HCT116 (cell line): ENCODE measurements at regions of chr2 and their contacts with region 1.

Region 1: DNA sequence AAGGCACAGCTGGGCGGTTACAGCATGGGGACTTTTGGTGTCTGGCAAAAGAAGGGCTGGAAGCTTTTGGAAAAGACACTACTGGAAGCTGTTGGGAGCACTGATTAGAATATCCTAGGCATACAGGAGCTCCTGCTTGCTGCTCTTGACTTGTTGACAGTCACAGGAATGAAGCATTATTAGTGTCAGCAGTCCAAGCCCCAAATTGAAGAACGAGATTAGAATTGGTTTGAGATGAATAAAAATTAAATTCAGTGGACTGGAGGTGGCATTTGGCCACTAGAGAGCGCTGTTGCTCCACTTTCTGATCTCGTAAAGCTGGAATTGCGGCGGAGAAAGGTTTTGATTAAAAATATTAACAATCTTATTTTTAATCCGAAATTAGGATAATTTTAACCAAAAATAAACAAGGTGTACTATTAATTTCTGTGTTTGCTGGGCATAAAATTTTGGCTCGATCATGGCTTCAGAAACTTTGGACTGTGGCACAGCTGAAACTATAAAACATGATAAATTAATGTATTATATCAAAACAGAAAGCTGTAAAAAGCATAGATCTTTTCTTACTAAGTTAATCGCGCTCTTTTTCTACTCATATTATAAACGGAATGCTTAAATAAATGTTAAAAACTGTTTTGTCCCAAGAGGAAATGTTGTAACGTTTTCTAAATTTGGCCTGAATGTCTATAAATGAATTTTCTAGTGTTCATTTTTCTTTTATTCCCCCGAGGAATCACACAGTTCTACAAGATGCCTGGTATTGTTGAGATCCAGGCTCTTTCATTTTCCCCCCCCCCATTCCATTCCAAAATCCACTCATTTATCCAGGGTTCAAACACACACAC is 2.4 kb upstream of the HOXD8 start:
- DNase-seq: no peak
- ATAC-seq: no peak
- H3K4me3 ChIP-seq: peak overlapping the region; percentile 9; a peak in 2 of 4 replicates
- H3K27ac ChIP-seq: no peak overlapping the region
- H3K4me1 ChIP-seq: peaks cover 6 to 17% of the 10 kb centered on the region in 2 experiments; a peak in 3 of 4 replicates
- H3K27me3 ChIP-seq: no peaks in the 10 kb centered on the region
- CTCF ChIP-seq: peak; percentile 64 to 88 (median 87)
- POLR2A ChIP-seq: no peak
- RAD21 ChIP-seq: peak; percentile 93

Region 2: GRCh38 chr2:175903384-175903936 is 223.7 kb before region 1 on chr2:
- CTCF ChIA-PET with region 1: no interaction called
- POLR2A ChIA-PET with region 1: no interaction called
- RAD21 ChIA-PET with region 1: no interaction called
- intact Hi-C with region 1: no loop called
- DNase-seq: no peak
- ATAC-seq: no peak
- H3K4me3 ChIP-seq: no peak overlapping the region
- H3K27ac ChIP-seq: no peak overlapping the region
- H3K4me1 ChIP-seq: no peaks in the 10 kb centered on the region
- H3K27me3 ChIP-seq: no peaks in the 10 kb centered on the region
- CTCF ChIP-seq: no peak
- POLR2A ChIP-seq: no peak
- RAD21 ChIP-seq: no peak

Region 3: GRCh38 chr2:176454893-176455811 is 328.0 kb after region 1 on chr2:
- CTCF ChIA-PET with region 1: interaction called, 27 read pairs
- POLR2A ChIA-PET with region 1: no interaction called
- RAD21 ChIA-PET with region 1: interaction called, 3 to 4 read pairs
- intact Hi-C with region 1: no loop called
- DNase-seq: peak; percentile 45
- ATAC-seq: peak; percentile 90
- H3K4me3 ChIP-seq: no peak overlapping the region
- H3K27ac ChIP-seq: no peak overlapping the region
- H3K4me1 ChIP-seq: 0 out of 4 replicates have a peak, but pooled peaks cover 0 to 3% of the 10 kb centered on the region in 2 experiments
- H3K27me3 ChIP-seq: no peaks in the 10 kb centered on the region
- CTCF ChIP-seq: peak; percentile 85 to 91 (median 85)
- POLR2A ChIP-seq: no peak
- RAD21 ChIP-seq: peak; percentile 86

Region 4: GRCh38 chr2:176638167-176639015 is 511.2 kb after region 1 on chr2:
- CTCF ChIA-PET with region 1: interaction called, 31 read pairs
- POLR2A ChIA-PET with region 1: no interaction called
- RAD21 ChIA-PET with region 1: no interaction called
- intact Hi-C with region 1: loop called (anchors 1 kb)
- DNase-seq: no peak
- ATAC-seq: peak; percentile 91
- H3K4me3 ChIP-seq: peak overlapping the region; percentile 10 to 31; a peak in 3 of 4 replicates
- H3K27ac ChIP-seq: no peak overlapping the region
- H3K4me1 ChIP-seq: peaks cover 0 to 9% of the 10 kb centered on the region in 2 experiments; a peak in 1 of 4 replicates
- H3K27me3 ChIP-seq: no peaks in the 10 kb centered on the region
- CTCF ChIP-seq: peak; percentile 53 to 89 (median 54)
- POLR2A ChIP-seq: no peak
- RAD21 ChIP-seq: peak; percentile 84

Region 5: DNA sequence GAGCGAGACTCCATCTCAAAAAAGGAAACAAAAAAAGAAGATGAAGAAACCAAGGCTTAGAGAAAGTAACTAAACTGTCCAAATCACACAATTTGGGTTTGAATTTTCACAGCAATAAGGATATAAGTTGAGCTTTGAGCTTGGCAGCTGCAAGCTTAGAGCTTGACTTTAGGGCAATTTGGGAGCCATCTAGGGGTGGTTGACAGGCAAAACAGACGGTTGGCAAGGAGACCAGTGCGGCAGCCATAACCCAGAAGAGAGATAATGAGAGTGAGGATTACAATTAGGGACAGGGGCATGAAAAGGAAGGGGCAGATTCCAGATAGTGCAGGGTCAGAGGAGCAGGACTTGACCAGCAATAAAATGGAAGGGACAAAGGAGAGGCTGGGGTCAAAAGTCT is 703.2 kb after region 1 on chr2:
- CTCF ChIA-PET with region 1: interaction called, 3 read pairs
- POLR2A ChIA-PET with region 1: no interaction called
- RAD21 ChIA-PET with region 1: no interaction called
- intact Hi-C with region 1: loop called (anchors 5 kb)
- DNase-seq: no peak
- ATAC-seq: peak; percentile 87
- H3K4me3 ChIP-seq: no peak overlapping the region
- H3K27ac ChIP-seq: no peak overlapping the region
- H3K4me1 ChIP-seq: no peaks in the 10 kb centered on the region
- H3K27me3 ChIP-seq: peaks cover 59% of the 10 kb centered on the region
- CTCF ChIP-seq: peak in 1 of 3 experiments; percentile 24; a peak in 2 of 6 replicates
- POLR2A ChIP-seq: no peak
- RAD21 ChIP-seq: peak; percentile 20; the same call in 1 of the 2 replicates

Region 6: DNA sequence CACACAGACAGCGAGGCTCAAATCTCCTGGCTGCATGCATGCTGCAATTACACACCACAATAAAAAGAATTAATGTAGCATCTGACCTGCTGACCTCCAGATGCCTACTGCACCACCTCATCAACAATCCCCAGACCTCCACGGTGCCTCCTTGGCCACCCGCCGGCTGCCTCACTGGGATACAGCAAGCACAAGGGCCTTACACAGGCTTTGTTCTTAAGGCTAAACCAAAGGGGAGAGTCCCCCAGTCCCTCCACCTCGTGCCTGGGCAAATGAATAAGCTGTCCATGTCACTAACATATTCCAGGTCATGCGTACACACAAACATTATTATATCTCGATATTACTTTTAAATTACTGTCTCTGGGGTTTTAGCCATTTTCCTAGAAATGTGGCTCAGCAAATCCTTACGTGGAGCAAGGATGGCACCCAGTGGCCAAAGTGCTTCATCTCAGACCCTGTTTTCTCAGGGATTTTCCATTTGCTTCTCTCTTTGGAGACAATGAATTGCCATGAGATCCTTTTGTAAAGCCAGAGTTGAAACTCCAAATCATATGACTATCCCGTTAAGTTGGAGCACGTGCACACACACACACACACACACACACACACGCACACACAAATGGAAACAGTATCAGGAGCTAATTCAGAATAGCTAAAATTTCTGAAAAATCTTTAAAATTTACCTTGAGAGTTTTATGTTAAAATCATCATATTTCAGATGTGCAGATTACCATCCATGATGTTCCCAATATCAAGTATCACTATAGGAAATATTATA is 1631.6 kb after region 1 on chr2:
- CTCF ChIA-PET with region 1: no interaction called
- POLR2A ChIA-PET with region 1: no interaction called
- RAD21 ChIA-PET with region 1: no interaction called
- intact Hi-C with region 1: loop called (anchors 5 kb)
- DNase-seq: peak; percentile 41
- ATAC-seq: peak; percentile 57
- H3K4me3 ChIP-seq: no peak overlapping the region
- H3K27ac ChIP-seq: no peak overlapping the region
- H3K4me1 ChIP-seq: peaks cover 0 to 9% of the 10 kb centered on the region in 2 experiments; a peak in 2 of 4 replicates
- H3K27me3 ChIP-seq: no peaks in the 10 kb centered on the region
- CTCF ChIP-seq: peak; percentile 37 to 65 (median 60); a peak in 5 of 6 replicates
- POLR2A ChIP-seq: no peak
- RAD21 ChIP-seq: peak; percentile 84